H1 (cell line): ENCODE measurements at regions of chr11 and their contacts with region 1.

Region 1: DNA sequence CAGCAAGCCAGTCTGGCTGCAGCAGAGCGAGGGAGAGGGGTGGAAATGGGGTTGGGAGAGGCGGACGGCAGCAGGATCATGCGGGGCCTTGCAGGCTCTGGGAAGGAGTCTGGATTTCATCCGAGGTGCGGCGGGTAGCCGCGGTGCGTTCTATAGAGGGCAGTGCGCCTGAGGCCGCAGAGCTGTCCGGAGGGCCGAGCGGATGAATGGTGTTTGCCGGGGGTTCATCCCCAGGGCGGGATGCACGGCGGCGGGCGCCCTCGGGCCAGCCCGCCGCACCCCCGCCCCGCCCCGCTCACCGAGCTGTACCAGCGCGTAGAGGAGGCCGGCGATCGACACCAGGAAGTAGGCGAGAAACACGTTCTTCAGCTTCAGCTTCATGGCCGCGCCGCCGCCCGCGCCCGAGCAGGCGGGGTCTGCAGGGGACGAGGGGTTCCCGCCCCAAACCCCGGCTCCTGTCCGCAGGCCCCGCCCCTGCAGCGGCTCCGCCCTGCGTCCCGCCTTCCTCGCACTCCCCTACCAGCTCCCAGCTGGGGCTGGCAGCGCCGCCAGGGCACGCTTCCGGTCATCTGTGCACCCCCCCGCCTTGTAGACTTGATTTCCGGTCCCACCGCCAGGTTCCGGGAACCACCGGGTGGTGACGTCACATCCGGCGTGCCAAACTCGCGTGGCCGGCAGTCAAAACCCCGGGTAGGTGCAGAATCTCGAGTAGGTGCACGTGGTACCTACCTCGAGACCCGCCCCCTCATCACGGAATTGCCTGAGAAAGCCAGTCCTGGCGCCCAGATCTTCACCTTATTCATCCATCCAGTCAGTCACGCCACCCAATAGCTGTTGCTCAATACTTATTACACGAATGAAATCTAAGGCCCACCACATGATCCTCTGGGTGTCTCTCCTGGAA is at the start of gene B3GAT3:
- DNase-seq: peak; percentile 97 to 98
- H3K4me3 ChIP-seq: peak within 1 kb of the TSS; percentile 59 to 87 (median 83)
- H3K27ac ChIP-seq: peak within 1 kb of the TSS; percentile 46
- H3K4me1 ChIP-seq: peaks cover 0 to 5% (median 0%) of the 10 kb centered on the region in 4 experiments; a peak in 1 of 7 replicates
- H3K27me3 ChIP-seq: no peaks in the 10 kb centered on the region
- CTCF ChIP-seq: peak in 1 of 3 experiments; percentile 7; a peak in 1 of 4 replicates
- EP300 ChIP-seq: no peak
- POLR2A ChIP-seq: peak in 1 of 2 experiments; percentile 96; a peak in 2 of 3 replicates
- RAD21 ChIP-seq: peak; percentile 0; a peak in 2 of 4 replicates
- total RNA-seq, gene B3GAT3: 28.0 and 34.5 TPM in 2 replicates

Region 2: DNA sequence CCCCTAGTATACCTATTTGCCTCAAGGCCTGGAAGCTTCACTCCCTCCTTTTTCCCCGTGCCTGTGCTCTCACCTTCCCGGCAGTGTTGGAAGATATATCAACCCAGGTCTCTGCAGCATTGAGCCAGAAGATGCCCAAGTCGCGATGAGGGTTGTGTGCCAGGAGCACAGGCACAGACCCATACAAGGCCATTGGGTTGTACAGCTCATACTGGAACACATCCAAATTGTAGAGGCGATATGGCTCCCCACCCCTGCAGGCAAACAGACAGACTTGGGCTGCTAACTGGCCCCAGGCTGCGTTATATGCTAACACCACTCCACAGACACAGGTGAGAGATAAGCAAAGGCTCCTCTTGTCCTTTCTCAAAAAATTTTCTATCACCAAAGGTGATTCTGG is 10.7 kb after region 1 on chr11:
- CTCF ChIA-PET with region 1: no interaction called
- POLR2A ChIA-PET with region 1: interaction called, 11 read pairs
- DNase-seq: no peak
- H3K4me3 ChIP-seq: no peak overlapping the region
- H3K27ac ChIP-seq: no peak overlapping the region
- H3K4me1 ChIP-seq: no peaks in the 10 kb centered on the region
- H3K27me3 ChIP-seq: no peaks in the 10 kb centered on the region
- CTCF ChIP-seq: no peak
- EP300 ChIP-seq: no peak
- POLR2A ChIP-seq: no peak
- RAD21 ChIP-seq: no peak

Region 3: GRCh38 chr11:62645956-62646824 is 24.4 kb after region 1 on chr11 and contains the start of gene GANAB:
- CTCF ChIA-PET with region 1: interaction called, 8 read pairs
- POLR2A ChIA-PET with region 1: interaction called, 43 read pairs
- DNase-seq: peak; percentile 87 to 96
- H3K4me3 ChIP-seq: peak within 1 kb of the TSS; percentile 71 to 99 (median 90)
- H3K27ac ChIP-seq: peak within 1 kb of the TSS; percentile 90
- H3K4me1 ChIP-seq: no peaks in the 10 kb centered on the region; a peak in 2 of 7 replicates
- H3K27me3 ChIP-seq: no peaks in the 10 kb centered on the region
- CTCF ChIP-seq: no peak
- EP300 ChIP-seq: no peak
- POLR2A ChIP-seq: peak; percentile 82 to 99
- RAD21 ChIP-seq: no peak
- total RNA-seq, gene GANAB: 326 and 330 TPM in 2 replicates

Region 4: DNA sequence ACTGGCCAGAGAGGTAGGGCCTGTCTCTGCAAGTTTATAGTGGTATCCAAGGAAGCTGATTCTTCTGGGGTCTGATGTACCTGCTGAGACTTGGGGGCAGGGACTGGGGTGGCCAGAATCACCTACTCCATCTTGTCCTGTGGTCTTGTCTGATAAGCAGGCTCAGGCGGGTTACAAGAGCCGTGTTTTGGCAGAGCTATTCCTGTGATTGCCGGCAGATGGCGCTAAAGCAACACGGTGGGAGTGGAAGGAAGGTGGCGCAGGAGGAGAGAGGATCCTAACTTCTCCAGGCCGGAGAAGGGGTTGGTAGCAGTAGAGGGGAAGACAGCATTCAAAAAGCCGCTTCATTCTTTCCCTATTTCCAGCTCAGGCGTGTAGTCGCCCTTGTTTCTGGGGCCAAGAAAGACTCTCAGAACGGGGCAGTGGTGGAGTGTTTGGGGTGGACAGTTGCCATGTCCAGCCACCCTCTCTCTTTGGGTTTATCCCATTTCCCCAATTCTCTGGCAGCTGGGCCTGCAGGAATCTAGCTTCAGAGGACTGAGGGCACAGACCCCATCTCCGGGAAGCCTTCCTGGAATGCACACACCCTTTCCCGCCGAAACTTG is 284.2 kb after region 1 on chr11:
- CTCF ChIA-PET with region 1: no interaction called
- POLR2A ChIA-PET with region 1: no interaction called
- DNase-seq: peak; percentile 71 to 96
- H3K4me3 ChIP-seq: no peak overlapping the region
- H3K27ac ChIP-seq: no peak overlapping the region
- H3K4me1 ChIP-seq: peaks cover 9 to 25% (median 16%) of the 10 kb centered on the region in 4 experiments
- H3K27me3 ChIP-seq: peaks cover 0 to 3% (median 1%) of the 10 kb centered on the region in 4 experiments; a peak in 2 of 7 replicates
- CTCF ChIP-seq: peak; percentile 99 to 100 (median 99)
- EP300 ChIP-seq: no peak
- POLR2A ChIP-seq: no peak
- RAD21 ChIP-seq: peak; percentile 100